Caco-2 (cell line): ENCODE measurements at regions of chr11 and their contacts with region 1.

Region 1: GRCh38 chr11:83782329-83782728 is 496.2 kb upstream of the CCDC90B start:
- DNase-seq: no peak
- H3K4me3 ChIP-seq: no peak overlapping the region
- H3K4me3 Mint-ChIP-seq: no peak overlapping the region
- H3K27ac Mint-ChIP-seq: no peak overlapping the region
- H3K4me1 ChIP-seq: no peaks in the 10 kb centered on the region
- H3K4me1 Mint-ChIP-seq: peaks cover 12% of the 10 kb centered on the region
- H3K27me3 ChIP-seq: no peaks in the 10 kb centered on the region
- H3K27me3 Mint-ChIP-seq: peaks cover 9% of the 10 kb centered on the region
- CTCF ChIP-seq: no peak

Region 2: GRCh38 chr11:83671289-83671688 is 111.0 kb before region 1 on chr11:
- CTCF ChIA-PET with region 1: no interaction called
- POLR2A ChIA-PET with region 1: no interaction called
- intact Hi-C with region 1: no loop called
- DNase-seq: no peak
- H3K4me3 ChIP-seq: no peak overlapping the region
- H3K4me3 Mint-ChIP-seq: no peak overlapping the region
- H3K27ac Mint-ChIP-seq: no peak overlapping the region
- H3K4me1 ChIP-seq: peaks cover 10% of the 10 kb centered on the region; the same call in 1 of the 2 replicates
- H3K4me1 Mint-ChIP-seq: no peaks in the 10 kb centered on the region
- H3K27me3 ChIP-seq: no peaks in the 10 kb centered on the region
- H3K27me3 Mint-ChIP-seq: no peaks in the 10 kb centered on the region
- CTCF ChIP-seq: peak in 1 of 2 experiments; percentile 11

Region 3: DNA sequence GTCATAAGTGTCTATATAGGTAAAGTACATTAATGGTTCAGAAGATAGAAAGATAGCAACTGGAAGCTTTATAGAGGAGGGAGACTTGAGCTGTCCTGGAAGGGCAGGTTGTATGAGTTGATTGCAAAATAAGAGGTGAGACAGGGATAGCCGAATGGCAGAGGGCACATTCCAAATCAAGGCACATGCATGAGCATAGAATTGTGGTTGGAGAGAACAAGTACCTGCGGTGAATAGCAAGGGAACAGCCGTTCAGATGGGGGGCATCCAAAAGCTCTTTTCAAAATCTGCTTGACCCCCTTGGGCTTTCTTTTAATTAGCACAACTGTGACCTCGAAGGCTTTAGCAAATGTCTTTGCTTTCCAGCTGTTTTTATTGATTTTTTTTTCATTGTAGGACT is 23.2 kb before region 1 on chr11:
- CTCF ChIA-PET with region 1: no interaction called
- POLR2A ChIA-PET with region 1: no interaction called
- intact Hi-C with region 1: loop called (anchors 2 kb)
- DNase-seq: no peak
- H3K4me3 ChIP-seq: no peak overlapping the region
- H3K4me3 Mint-ChIP-seq: no peak overlapping the region
- H3K27ac Mint-ChIP-seq: no peak overlapping the region
- H3K4me1 ChIP-seq: no peaks in the 10 kb centered on the region
- H3K4me1 Mint-ChIP-seq: no peaks in the 10 kb centered on the region
- H3K27me3 ChIP-seq: no peaks in the 10 kb centered on the region
- H3K27me3 Mint-ChIP-seq: peaks cover 19% of the 10 kb centered on the region
- CTCF ChIP-seq: no peak

Region 4: GRCh38 chr11:83845797-83846196 is 63.5 kb after region 1 on chr11:
- CTCF ChIA-PET with region 1: no interaction called
- POLR2A ChIA-PET with region 1: no interaction called
- intact Hi-C with region 1: no loop called
- DNase-seq: no peak
- H3K4me3 ChIP-seq: no peak overlapping the region
- H3K4me3 Mint-ChIP-seq: no peak overlapping the region
- H3K27ac Mint-ChIP-seq: no peak overlapping the region
- H3K4me1 ChIP-seq: no peaks in the 10 kb centered on the region
- H3K4me1 Mint-ChIP-seq: no peaks in the 10 kb centered on the region
- H3K27me3 ChIP-seq: no peaks in the 10 kb centered on the region
- H3K27me3 Mint-ChIP-seq: peaks cover 14% of the 10 kb centered on the region
- CTCF ChIP-seq: no peak